Caco-2 (cell line): ENCODE measurements at regions of chr10 and their contacts with region 1.

Region 1: DNA sequence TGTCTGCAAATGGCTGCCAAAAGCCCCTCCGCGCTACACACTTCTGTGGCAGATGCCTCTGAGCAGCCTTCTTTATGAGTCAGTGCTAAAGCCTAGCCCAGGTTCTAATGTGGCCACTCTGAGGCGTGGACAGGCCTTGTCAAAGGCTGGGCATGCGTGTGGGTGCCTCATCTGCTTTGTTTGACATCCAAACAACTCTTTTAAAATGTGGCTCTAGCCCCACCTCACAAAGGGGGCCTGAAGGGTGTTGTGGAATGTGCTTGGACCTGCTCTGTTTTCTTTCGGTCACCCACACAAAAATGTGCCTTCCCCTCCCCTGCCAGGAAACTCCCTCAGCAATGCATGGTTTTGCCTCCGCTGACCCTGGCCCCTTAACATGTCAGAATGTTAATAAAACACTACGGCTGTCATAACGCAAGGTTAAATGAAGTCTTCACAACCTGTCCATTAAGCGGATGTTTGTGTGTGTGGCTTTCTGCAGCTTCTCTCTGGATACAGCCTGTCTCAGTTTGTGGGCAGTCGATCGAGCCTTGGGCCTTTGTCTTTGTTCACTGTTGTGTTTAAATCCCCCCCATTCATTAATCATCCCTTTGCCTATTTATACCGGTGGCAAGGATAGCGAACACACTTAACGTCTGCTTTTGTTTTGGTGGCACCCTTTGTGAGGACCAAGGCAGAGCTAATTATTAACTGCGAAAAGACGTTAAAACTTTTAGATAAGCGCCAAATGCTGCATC is 718.9 kb downstream of the LRMDA start:
- DNase-seq: peak; percentile 93 to 95
- H3K4me3 ChIP-seq: peak overlapping the region; percentile 17; the same call in 1 of the 2 replicates
- H3K4me3 Mint-ChIP-seq: peak overlapping the region; percentile 68
- H3K27ac Mint-ChIP-seq: peak overlapping the region; percentile 99
- H3K4me1 ChIP-seq: peaks cover 26% of the 10 kb centered on the region
- H3K4me1 Mint-ChIP-seq: peaks cover 28% of the 10 kb centered on the region
- H3K27me3 ChIP-seq: no peaks in the 10 kb centered on the region
- H3K27me3 Mint-ChIP-seq: no peaks in the 10 kb centered on the region
- CTCF ChIP-seq: no peak

Region 2: GRCh38 chr10:76106611-76107010 is 43.7 kb before region 1 on chr10:
- CTCF ChIA-PET with region 1: no interaction called
- POLR2A ChIA-PET with region 1: no interaction called
- intact Hi-C with region 1: loop called (anchors 2 kb)
- DNase-seq: no peak
- H3K4me3 ChIP-seq: no peak overlapping the region
- H3K4me3 Mint-ChIP-seq: no peak overlapping the region
- H3K27ac Mint-ChIP-seq: no peak overlapping the region
- H3K4me1 ChIP-seq: peaks cover 10% of the 10 kb centered on the region
- H3K4me1 Mint-ChIP-seq: peaks cover 21% of the 10 kb centered on the region
- H3K27me3 ChIP-seq: no peaks in the 10 kb centered on the region
- H3K27me3 Mint-ChIP-seq: no peaks in the 10 kb centered on the region
- CTCF ChIP-seq: no peak

Region 3: DNA sequence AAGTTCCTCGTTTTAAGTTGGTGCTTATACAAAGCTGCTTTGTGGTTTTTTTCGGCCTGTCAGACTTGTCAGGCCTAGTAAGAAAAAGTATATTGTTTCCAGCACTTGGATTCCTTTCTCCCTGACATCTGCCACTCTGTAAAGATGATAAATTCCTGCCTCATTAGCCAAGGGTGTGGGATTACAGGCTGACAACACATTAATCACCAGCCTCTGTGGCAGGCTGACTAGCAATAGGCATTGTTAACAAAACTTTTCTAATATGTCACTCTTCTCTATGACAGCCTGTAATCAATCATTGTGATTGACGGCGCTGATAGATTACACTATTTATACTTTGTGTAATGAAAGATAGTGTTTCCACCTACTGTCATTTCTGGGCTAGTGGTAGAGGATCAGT is 36.3 kb before region 1 on chr10:
- CTCF ChIA-PET with region 1: no interaction called
- POLR2A ChIA-PET with region 1: no interaction called
- intact Hi-C with region 1: loop called (anchors 1 kb)
- DNase-seq: peak; percentile 66 to 73
- H3K4me3 ChIP-seq: no peak overlapping the region
- H3K4me3 Mint-ChIP-seq: peak overlapping the region; percentile 47
- H3K27ac Mint-ChIP-seq: peak overlapping the region; percentile 66
- H3K4me1 ChIP-seq: peaks cover 35% of the 10 kb centered on the region
- H3K4me1 Mint-ChIP-seq: peaks cover 44% of the 10 kb centered on the region
- H3K27me3 ChIP-seq: no peaks in the 10 kb centered on the region
- H3K27me3 Mint-ChIP-seq: no peaks in the 10 kb centered on the region
- CTCF ChIP-seq: no peak

Region 4: DNA sequence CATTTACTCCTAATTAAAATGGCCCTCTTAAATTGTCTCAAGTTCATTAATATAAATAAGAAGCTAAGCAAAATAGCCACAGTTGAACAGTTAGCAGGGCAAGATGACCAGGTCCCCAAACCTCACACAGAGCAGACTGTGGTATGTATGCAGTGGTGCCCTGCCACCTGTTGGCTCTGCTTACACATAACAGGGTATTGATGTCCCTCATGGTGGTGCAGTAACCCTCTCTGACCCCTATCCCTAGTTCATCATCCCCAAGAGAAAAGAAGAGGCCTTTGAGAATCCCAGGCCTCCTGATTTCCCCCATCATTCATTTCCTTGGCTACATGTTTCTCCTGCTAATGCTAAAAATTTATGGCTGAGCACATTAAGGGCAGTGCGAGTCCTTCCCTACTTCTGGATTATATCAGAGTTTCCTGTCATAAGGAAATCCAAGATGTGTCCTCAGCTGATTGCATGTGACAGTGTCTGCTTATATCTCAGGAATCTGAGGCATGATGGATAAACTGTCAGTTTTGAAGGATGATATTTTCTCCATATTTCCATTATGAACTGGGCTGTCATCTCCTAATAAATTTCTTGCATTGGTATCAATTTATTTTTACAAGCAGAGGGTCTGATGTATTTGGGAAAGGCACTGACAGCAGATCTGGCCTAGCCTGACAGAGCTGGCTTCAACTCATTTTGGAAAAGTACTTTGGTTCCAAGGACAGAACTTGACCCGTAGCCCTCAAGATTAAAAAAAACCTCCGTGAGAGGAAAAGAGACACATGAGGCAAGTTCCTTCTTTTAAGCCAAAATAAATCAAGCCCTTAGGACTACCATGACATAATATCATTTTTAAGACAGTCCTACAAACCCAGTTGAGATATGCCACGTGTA is 161.7 kb after region 1 on chr10:
- CTCF ChIA-PET with region 1: no interaction called
- POLR2A ChIA-PET with region 1: no interaction called
- intact Hi-C with region 1: loop called (anchors 2 kb)
- DNase-seq: peak; percentile 61 to 67
- H3K4me3 ChIP-seq: no peak overlapping the region
- H3K4me3 Mint-ChIP-seq: no peak overlapping the region
- H3K27ac Mint-ChIP-seq: no peak overlapping the region
- H3K4me1 ChIP-seq: peaks cover 4% of the 10 kb centered on the region
- H3K4me1 Mint-ChIP-seq: no peaks in the 10 kb centered on the region
- H3K27me3 ChIP-seq: no peaks in the 10 kb centered on the region
- H3K27me3 Mint-ChIP-seq: no peaks in the 10 kb centered on the region
- CTCF ChIP-seq: peak; percentile 74 to 76